H1 (cell line): ENCODE measurements at regions of chr1 and their contacts with region 1.

Region 1: DNA sequence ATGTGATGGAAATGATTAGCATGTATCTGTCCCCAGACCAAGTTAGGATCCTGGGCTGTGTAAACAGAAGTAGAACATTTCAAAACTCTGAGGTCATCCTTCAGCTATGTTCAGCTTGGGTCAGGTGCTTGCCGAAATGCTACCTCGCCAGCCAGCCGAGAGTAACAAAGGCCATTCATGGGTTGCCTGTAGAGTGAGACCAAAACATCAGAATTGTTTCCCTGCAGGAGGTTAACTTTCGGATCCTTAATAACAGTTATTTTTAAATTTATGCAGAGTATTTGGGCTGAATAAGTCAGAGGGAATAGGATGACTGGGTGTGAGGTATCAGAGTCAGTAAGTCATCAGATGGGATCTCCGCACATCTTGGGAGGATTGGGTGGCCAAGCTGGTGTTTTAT is 35.6 kb downstream of the SMYD2 start:
- DNase-seq: peak; percentile 55 to 88
- H3K4me3 ChIP-seq: peak overlapping the region in 1 of 4 experiments; percentile 45; a peak in 2 of 8 replicates
- H3K27ac ChIP-seq: no peak overlapping the region
- H3K4me1 ChIP-seq: peaks cover 3 to 23% (median 15%) of the 10 kb centered on the region in 4 experiments
- H3K27me3 ChIP-seq: peaks cover 20 to 50% (median 45%) of the 10 kb centered on the region in 4 experiments; a peak in 6 of 7 replicates
- CTCF ChIP-seq: no peak
- EP300 ChIP-seq: peak in 1 of 2 experiments; percentile 97; a peak in 2 of 3 replicates
- POLR2A ChIP-seq: 0 out of 3 replicates have a peak, but pooled peaks of 1 of the 2 experiments have one; percentile 44
- RAD21 ChIP-seq: no peak

Region 2: DNA sequence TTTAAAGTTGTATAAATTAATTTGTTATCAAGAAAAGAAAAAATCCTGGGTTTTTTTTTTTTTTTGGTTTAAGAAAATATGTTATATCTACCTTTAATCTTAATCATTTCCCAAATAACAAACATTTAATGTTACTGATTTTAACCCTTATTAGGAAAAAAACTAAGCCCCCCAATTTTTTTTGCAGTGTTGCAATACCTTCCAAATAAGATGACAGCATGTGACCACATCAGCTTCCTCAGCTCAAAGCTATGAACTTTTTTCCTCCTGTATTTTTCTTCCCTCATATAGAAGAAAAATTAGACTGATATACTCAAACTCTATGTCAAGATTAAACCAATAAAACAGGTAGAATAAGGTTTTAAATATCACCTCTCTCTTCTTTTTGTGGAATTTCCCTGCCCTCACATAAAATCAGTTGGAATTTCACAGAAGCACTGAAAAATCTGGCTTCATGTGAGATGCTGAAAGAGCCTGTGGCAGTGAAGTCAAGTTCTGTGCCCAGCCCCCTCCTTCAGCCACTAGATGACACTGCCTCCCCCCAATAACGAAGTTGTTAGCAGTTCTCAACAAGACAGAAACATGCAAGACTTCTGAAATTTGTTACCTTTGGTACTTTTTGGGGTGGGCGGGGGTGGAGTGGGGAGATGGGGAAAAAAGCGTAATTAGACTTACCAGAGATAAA is 45.3 kb before region 1 on chr1:
- CTCF ChIA-PET with region 1: interaction called, 38 read pairs
- POLR2A ChIA-PET with region 1: interaction called, 4 read pairs
- DNase-seq: no peak
- H3K4me3 ChIP-seq: no peak overlapping the region
- H3K27ac ChIP-seq: no peak overlapping the region
- H3K4me1 ChIP-seq: peaks cover 0 to 2% (median 0%) of the 10 kb centered on the region in 4 experiments; a peak in 4 of 7 replicates
- H3K27me3 ChIP-seq: no peaks in the 10 kb centered on the region
- CTCF ChIP-seq: peak; percentile 39 to 50 (median 46)
- EP300 ChIP-seq: no peak
- POLR2A ChIP-seq: no peak
- RAD21 ChIP-seq: peak; percentile 68 to 77

Region 3: GRCh38 chr1:214281021-214281719 is 35.4 kb before region 1 on chr1 and contains the start of gene SMYD2:
- CTCF ChIA-PET with region 1: interaction called, 38 read pairs
- POLR2A ChIA-PET with region 1: interaction called, 15 read pairs
- DNase-seq: peak in 1 of 2 experiments; percentile 85
- H3K4me3 ChIP-seq: peak within 1 kb of the TSS; percentile 70 to 79 (median 70)
- H3K27ac ChIP-seq: peak within 1 kb of the TSS; percentile 33; the same call in 1 of the 2 replicates
- H3K4me1 ChIP-seq: peaks cover 2 to 12% (median 4%) of the 10 kb centered on the region in 4 experiments; a peak in 4 of 7 replicates
- H3K27me3 ChIP-seq: peaks cover 8 to 38% (median 34%) of the 10 kb centered on the region in 4 experiments
- CTCF ChIP-seq: no peak
- EP300 ChIP-seq: no peak
- POLR2A ChIP-seq: no peak
- RAD21 ChIP-seq: no peak
- total RNA-seq, gene SMYD2: 4.4 and 5.2 TPM in 2 replicates

Region 4: DNA sequence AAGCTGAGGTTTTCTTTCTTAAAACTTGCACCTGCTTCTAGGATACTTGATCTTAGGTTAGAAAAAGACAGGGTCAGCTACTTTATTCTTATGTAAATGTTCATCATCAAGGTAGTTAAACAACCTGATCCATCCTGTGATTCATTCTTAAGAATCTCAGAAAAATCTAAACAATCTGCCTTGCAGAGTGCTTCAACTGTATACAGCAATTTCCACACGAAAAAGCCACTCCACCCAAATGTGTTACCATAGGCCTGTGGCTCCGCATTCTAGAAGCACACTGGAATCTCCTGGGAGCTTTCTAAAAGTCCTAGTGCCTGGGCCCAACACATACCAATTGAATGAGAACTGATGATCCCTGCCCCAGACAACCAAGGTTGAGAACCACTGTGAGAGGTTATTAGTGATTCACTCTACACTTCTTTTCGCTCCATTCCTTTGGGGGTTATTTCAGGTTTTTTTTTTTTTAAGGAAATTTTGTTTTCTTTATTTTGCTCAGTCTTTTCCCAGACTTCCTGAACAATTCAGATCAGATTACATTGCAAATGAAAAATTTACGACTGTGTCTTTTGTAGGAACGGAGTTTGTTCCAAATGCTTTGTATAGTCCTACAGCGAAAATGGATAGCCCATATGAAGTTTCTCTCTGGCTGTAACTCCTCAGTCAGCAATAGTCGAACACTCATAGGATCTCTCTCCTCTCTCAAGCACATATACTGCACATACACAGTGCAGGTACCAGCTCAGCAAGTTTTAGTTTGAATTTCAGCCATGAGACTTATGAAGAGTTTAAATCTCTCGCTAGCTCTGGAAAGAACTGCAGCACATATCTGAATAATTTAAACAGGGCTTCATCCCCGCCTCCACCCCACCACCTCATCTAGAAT is 19.5 kb before region 1 on chr1:
- CTCF ChIA-PET with region 1: interaction called, 54 read pairs
- POLR2A ChIA-PET with region 1: interaction called, 5 read pairs
- DNase-seq: no peak
- H3K4me3 ChIP-seq: peak overlapping the region in 1 of 4 experiments; percentile 13; a peak in 1 of 8 replicates
- H3K27ac ChIP-seq: no peak overlapping the region
- H3K4me1 ChIP-seq: peaks cover 0 to 4% (median 2%) of the 10 kb centered on the region in 4 experiments; a peak in 3 of 7 replicates
- H3K27me3 ChIP-seq: peaks cover 2 to 24% (median 21%) of the 10 kb centered on the region in 4 experiments
- CTCF ChIP-seq: no peak
- EP300 ChIP-seq: no peak
- POLR2A ChIP-seq: no peak
- RAD21 ChIP-seq: no peak

Region 5: DNA sequence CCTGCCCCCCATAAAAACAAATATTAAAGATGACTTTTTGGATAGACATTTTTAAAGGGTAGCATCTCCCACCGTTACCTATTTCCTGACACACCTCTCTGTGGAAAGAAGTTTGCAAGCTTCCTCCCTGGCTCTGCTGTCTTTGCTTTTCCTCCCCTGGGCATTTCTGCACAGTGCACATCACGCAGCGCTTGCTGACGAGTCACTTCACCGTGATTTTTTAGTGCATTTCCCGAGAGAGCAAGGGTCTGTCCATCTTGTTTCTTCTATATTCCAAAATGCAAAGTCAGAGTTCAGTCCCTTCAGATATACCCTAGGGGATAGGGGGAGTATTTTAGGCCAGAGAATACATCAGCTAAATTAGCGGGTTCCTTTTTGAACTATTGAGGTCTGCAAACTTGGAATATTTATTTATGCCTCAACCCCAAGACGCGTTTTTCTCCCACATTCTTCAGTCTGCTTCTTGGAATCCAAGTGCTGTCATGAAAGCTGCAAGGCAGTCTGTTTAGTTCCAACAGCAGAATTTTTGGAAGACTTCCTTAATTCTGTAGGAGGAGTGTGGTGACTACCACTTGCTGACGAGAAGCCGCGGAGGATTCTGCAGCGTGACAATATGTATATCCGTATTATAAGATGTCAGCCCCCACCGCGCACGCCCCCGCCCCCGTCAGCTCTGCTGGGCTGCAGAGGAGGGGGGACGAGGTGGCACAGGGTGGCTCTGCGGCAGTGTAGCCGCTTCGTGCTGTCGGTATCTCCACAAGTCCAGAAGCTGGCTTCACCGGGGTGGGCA is 13.3 kb before region 1 on chr1:
- CTCF ChIA-PET with region 1: interaction called, 23 read pairs
- POLR2A ChIA-PET with region 1: interaction called, 5 read pairs
- DNase-seq: no peak
- H3K4me3 ChIP-seq: no peak overlapping the region
- H3K27ac ChIP-seq: no peak overlapping the region
- H3K4me1 ChIP-seq: peaks cover 0 to 3% (median 1%) of the 10 kb centered on the region in 4 experiments; a peak in 4 of 7 replicates
- H3K27me3 ChIP-seq: peaks cover 0 to 3% (median 0%) of the 10 kb centered on the region in 4 experiments; a peak in 1 of 7 replicates
- CTCF ChIP-seq: no peak
- EP300 ChIP-seq: no peak
- POLR2A ChIP-seq: no peak
- RAD21 ChIP-seq: no peak